ENCODE measurements at regions of chr17 and their contacts with region 1.

Region 1: DNA sequence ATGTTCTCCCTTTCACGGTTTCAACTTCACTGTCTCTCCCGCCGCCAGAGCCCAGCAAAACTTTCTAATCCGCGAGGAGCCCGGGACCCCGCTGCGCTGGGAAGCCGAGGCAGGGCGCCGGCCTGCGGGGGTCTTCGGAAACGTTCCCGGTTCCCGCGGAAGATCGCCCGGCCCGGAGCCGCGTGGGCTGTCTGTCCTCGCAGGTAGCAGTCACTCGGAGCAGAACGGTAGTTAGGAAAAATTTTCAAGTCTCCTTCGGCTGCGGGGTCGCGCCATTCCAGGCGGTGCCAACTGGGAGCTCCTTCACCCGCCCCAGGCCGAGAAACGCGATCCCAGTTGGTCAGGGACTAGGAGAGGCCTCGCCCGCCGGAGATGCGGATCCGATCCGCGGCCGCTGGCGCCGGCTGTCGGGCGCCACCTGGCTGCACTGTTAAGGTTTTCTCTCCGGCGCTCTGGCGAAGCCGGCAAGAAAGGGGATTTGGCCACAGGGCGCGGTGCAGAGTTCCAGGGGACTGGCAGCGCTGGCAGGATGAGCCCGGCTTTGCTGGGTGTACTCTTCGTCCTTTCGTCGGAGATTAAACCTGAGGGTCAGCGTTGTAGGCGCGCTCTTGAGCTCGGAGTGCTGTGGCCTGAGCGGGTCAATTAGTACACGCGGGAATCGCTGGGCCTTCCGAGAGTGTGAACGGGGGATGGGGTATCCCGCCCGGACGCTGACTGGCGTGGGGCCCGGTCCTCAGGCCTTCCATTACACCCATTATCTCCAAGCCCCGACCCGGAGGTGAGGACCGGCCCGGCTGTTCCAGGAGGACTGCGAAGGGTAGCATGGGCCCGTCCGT is 135.4 kb downstream of the KCNJ12 start:
- DNase-seq: peak; percentile 87
- H3K4me3 ChIP-seq: peak overlapping the region; percentile 51
- H3K27ac ChIP-seq: no peak overlapping the region
- H3K4me1 ChIP-seq: no peaks in the 10 kb centered on the region
- H3K27me3 ChIP-seq: no peaks in the 10 kb centered on the region
- CTCF ChIP-seq: peak; percentile 78

Region 2: DNA sequence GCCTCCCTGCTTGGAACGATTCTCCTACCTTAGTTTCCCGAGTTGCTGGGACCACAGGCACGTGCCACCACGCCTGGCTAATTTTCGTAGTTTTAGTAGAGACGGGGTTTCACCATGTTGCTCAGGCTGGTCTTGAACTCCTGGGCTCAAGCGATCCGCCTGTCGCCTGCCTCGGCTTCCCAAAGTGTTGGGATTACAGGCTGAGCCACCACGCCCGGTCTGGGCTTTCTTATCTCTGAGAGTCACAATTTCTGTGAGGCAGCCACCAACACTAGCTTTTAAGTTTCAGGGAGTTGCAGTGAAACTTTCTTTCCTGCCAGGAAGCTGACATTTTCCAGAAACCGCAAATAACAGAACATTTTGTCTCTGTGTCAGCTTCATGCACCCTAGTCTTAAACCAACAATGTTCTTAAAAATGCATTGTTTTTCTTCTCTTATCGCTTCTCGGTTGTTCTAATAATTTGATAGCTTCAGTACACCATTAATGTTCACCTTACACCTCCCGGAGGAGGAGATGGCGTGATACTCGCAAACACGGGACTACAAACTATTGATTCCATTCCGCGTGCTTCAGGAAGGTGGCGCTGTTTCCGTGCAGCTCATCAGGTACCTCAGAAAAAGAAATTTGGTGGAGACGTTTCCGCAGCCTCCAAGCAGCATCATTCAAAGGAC is 392.2 kb before region 1 on chr17:
- CTCF ChIA-PET with region 1: interaction called, 4 read pairs
- POLR2A ChIA-PET with region 1: no interaction called
- intact Hi-C with region 1: loop called (anchors 5 kb)
- DNase-seq: peak; percentile 69
- H3K4me3 ChIP-seq: peak overlapping the region; percentile 15
- H3K27ac ChIP-seq: no peak overlapping the region
- H3K4me1 ChIP-seq: no peaks in the 10 kb centered on the region
- H3K27me3 ChIP-seq: peaks cover 10% of the 10 kb centered on the region
- CTCF ChIP-seq: peak; percentile 92

Region 3: DNA sequence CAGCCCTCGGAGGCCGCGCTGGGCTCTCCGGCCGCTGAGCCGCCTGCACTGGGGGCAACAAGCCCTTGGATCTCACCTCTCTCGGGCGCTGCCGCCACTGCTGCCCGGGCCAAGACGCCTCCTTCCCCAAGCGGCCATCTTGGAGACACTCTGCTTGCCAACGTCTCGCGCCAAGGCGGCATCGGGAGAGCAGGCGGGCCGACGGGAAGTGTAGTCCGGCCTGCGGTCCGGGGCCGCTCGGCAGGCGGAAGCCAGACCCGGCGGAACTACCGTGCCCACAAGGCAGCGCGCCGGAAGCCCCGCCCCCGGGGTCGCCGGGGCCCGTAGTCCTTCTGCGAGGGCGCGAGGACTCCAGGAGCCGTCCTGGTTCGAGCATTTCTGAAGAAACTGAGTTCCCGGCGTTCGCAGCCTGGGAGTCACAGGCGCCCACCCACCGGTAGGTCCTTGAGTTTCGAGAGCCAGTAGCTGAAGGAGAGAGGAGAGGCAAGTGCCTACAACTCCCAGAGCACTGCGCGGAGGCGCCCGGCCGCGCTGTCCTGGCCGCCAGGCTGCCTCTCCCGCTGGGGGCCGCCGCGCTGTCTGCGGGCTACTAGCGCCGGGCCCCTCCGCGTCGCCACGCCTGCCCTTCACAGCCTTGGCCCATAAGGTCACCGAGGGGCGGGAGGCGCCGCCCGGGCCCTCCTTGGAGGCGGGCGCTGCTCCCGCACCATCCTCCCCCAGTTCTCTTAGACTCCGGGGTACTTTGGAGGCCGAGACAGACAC is 297.4 kb before region 1 on chr17 and contains the start of gene TMEM11:
- CTCF ChIA-PET with region 1: no interaction called
- POLR2A ChIA-PET with region 1: no interaction called
- intact Hi-C with region 1: loop called (anchors 10 kb)
- DNase-seq: peak; percentile 97
- H3K4me3 ChIP-seq: peak within 1 kb of the TSS; percentile 99
- H3K27ac ChIP-seq: peak within 1 kb of the TSS; percentile 97
- H3K4me1 ChIP-seq: no peaks in the 10 kb centered on the region
- H3K27me3 ChIP-seq: no peaks in the 10 kb centered on the region
- CTCF ChIP-seq: no peak
- total RNA-seq, gene TMEM11: 46.5 and 47.6 TPM in 2 replicates

Region 4: GRCh38 chr17:21275579-21276263 is 235.9 kb before region 1 on chr17:
- CTCF ChIA-PET with region 1: interaction called, 8 read pairs
- POLR2A ChIA-PET with region 1: no interaction called
- intact Hi-C with region 1: loop called (anchors 1 kb)
- DNase-seq: peak; percentile 92
- H3K4me3 ChIP-seq: peak overlapping the region; percentile 58
- H3K27ac ChIP-seq: peak overlapping the region; percentile 55
- H3K4me1 ChIP-seq: peaks cover 11% of the 10 kb centered on the region
- H3K27me3 ChIP-seq: no peaks in the 10 kb centered on the region
- CTCF ChIP-seq: no peak

Measured in A673 (cell line).